ENCODE measurements at regions of chr11 and their contacts with region 1.

Region 1: DNA sequence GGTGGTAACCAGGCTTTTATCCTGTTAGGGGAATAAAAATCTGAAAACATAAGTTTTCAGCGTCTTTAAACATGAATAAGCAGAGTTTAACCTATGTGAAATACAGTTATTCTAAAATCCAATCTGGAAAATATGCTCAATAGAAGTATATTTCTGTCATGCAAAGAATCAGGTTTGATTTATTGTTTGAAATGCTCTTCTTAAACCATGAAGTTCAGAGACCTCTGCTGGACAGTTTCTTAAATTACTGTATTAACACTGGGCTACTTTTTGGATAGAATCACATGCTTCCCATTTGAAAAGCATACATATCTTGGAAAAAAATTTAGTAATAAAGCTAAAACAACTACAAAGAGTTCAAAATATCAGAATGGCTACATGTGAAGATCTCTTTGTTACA is 25.4 kb downstream of the APIP start:
- DNase-seq: no peak
- ATAC-seq: peak; percentile 63
- H3K4me3 ChIP-seq: no peak overlapping the region
- H3K27ac ChIP-seq: no peak overlapping the region
- H3K4me1 ChIP-seq: no peaks in the 10 kb centered on the region
- H3K27me3 ChIP-seq: no peaks in the 10 kb centered on the region
- CTCF ChIP-seq: peak; percentile 53

Region 2: DNA sequence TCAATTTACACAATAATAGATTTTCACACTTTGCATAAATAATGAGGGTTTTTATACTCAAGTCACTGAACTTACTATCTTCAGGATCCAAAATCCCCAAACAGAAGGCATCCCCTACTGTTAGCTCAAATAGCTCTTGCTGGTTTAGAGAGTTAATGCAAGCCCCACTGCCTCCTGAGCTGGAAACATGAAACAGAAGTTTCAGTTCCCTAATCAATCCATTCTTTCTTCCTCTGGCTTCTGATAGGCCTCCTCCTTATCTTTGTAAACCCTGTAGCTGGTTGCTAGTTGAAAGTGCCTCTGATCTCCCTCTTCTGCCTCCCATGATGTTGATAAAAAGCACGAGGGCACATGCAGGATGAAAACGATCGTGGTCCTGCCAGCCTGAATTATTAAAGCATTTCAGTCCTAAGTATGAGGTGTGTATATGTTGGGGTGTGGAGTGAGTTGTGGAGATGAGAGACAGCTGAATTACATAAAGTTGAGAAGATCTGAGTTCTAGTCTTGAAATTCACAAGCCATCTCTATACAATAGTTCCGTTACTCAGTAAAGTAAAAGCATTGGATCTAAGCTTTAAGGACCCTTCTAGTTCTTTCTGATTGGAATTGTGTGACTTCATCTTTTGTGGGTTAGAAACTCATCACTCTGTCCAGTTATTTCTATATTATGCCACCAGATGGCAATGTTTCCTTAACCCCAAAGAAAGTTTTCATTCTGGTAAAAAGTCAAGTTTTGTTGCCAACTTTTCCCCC is 304.9 kb before region 1 on chr11:
- intact Hi-C with region 1: loop called (anchors 10 kb)
- DNase-seq: no peak
- ATAC-seq: peak; percentile 79
- H3K4me3 ChIP-seq: no peak overlapping the region
- H3K27ac ChIP-seq: peak overlapping the region; percentile 36
- H3K4me1 ChIP-seq: peaks cover 19% of the 10 kb centered on the region
- H3K27me3 ChIP-seq: no peaks in the 10 kb centered on the region
- CTCF ChIP-seq: peak; percentile 68

Region 3: GRCh38 chr11:34721646-34722045 is 169.2 kb before region 1 on chr11:
- intact Hi-C with region 1: no loop called
- DNase-seq: no peak
- ATAC-seq: no peak
- H3K4me3 ChIP-seq: no peak overlapping the region
- H3K27ac ChIP-seq: no peak overlapping the region
- H3K4me1 ChIP-seq: no peaks in the 10 kb centered on the region
- H3K27me3 ChIP-seq: no peaks in the 10 kb centered on the region
- CTCF ChIP-seq: no peak